Mucosa of descending colon (tissue), 3 donors: ENCODE measurements at regions of chr1 and their contacts with region 1.

Region 1: GRCh38 chr1:200306944-200307754 is 102.7 kb downstream of the ZNF281 start:
- DNase-seq: peak in 1 of 3 donors; percentile 38
- ATAC-seq: peak; percentile 65
- H3K4me3 ChIP-seq: no peak overlapping the region
- H3K4me1 ChIP-seq: no peaks in the 10 kb centered on the region
- CTCF ChIP-seq: peak; percentile 57

Region 2: DNA sequence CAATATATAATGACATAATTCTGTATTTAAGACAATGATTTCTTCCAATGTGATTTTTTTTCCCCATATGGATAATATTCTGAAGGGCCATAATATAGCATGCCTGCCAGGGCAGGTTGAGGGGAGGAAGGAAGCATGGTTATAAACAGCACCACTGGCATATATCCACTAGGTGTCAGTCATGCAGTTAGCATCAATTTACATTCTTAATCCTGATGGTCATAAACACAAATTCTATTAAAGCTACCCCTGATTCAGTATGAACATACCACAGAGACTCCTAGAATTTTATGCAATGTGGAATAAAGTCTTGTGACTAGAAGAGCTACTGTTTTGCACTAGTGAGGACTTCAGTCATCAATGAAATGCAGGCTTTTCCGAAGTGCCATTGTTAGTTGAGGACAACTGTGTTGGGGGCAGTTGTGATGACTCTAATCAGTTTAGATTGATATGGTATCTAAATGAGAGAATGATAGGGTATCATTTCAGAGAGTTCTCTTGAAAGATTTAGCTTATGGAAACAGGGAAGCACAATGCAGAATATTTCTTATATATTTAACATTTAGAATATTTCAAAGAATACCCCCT is 622.4 kb before region 1 on chr1:
- intact Hi-C with region 1: loop called in 1 of 2 experiments (anchors 5 kb)
- DNase-seq: peak in 1 of 3 donors; percentile 67
- ATAC-seq: peak; percentile 89
- H3K4me3 ChIP-seq: no peak overlapping the region
- H3K4me1 ChIP-seq: no peaks in the 10 kb centered on the region
- CTCF ChIP-seq: peak; percentile 49